IMR-90 (cell line): ENCODE measurements at regions of chr13 and their contacts with region 1.

Region 1: DNA sequence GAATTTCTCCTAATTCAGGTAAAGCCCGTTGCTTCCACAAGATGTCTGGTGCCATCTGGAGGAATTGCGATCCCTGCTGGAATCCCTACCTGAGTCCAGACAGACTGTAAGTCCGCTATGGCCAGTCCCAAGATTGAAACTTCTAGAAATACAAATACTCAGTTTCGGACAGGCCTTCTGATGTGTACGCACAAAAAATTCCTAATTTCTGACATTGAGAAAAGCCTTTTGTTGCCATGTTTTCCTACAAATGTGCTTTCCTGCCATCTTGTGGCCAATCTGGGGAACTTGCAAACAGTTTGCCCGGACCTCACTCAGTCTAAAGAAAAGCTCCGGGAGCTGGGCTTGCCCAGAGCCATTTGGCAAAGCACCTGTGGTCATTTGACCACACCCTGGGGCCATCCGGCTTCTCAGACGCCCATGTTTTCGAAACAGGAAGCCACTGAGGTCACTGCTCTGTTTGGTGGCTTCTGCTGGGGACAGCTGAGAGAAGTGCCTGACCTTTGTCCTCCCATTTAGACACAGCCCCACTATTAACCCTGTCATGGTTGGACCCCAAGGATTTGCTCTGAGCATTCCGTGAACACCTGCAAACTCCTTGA is 79.4 kb downstream of the SLC15A1 start:
- DNase-seq: peak; percentile 75
- ATAC-seq: peak; percentile 82
- H3K4me3 ChIP-seq: no peak overlapping the region
- H3K27ac ChIP-seq: no peak overlapping the region
- H3K4me1 ChIP-seq: peaks cover 6% of the 10 kb centered on the region; the same call in 1 of the 2 replicates
- H3K27me3 ChIP-seq: peaks cover 16% of the 10 kb centered on the region
- CTCF ChIP-seq: peak; percentile 85
- POLR2A ChIP-seq: no peak
- RAD21 ChIP-seq: peak; percentile 82

Region 2: GRCh38 chr13:97849305-97849704 is 823.7 kb before region 1 on chr13:
- CTCF ChIA-PET with region 1: no interaction called
- POLR2A ChIA-PET with region 1: no interaction called
- dilution Hi-C with region 1: no loop called
- in situ Hi-C with region 1: loop called (anchors 25 kb)
- intact Hi-C with region 1: loop called (anchors 5 kb)
- DNase-seq: peak; percentile 52
- ATAC-seq: peak; percentile 73
- H3K4me3 ChIP-seq: no peak overlapping the region
- H3K27ac ChIP-seq: no peak overlapping the region
- H3K4me1 ChIP-seq: peaks cover 3% of the 10 kb centered on the region; the same call in 1 of the 2 replicates
- H3K27me3 ChIP-seq: peaks cover 4% of the 10 kb centered on the region
- CTCF ChIP-seq: peak; percentile 58
- POLR2A ChIP-seq: no peak
- RAD21 ChIP-seq: peak; percentile 70

Region 3: GRCh38 chr13:98445340-98446233 is 227.5 kb before region 1 on chr13:
- CTCF ChIA-PET with region 1: interaction called, 6 read pairs
- POLR2A ChIA-PET with region 1: no interaction called
- dilution Hi-C with region 1: loop called (anchors 25 kb)
- in situ Hi-C with region 1: no loop called
- intact Hi-C with region 1: loop called (anchors 1 kb)
- DNase-seq: peak; percentile 41
- ATAC-seq: peak; percentile 82
- H3K4me3 ChIP-seq: no peak overlapping the region
- H3K27ac ChIP-seq: no peak overlapping the region
- H3K4me1 ChIP-seq: peaks cover 13% of the 10 kb centered on the region
- H3K27me3 ChIP-seq: no peaks in the 10 kb centered on the region
- CTCF ChIP-seq: peak; percentile 84
- POLR2A ChIP-seq: no peak
- RAD21 ChIP-seq: peak; percentile 86

Region 4: GRCh38 chr13:98454389-98454881 is 218.6 kb before region 1 on chr13:
- CTCF ChIA-PET with region 1: no interaction called
- POLR2A ChIA-PET with region 1: no interaction called
- dilution Hi-C with region 1: loop called (anchors 25 kb)
- in situ Hi-C with region 1: no loop called
- intact Hi-C with region 1: loop called (anchors 2 kb)
- DNase-seq: peak; percentile 94
- ATAC-seq: peak; percentile 75
- H3K4me3 ChIP-seq: no peak overlapping the region
- H3K27ac ChIP-seq: peak overlapping the region; percentile 91
- H3K4me1 ChIP-seq: peaks cover 14% of the 10 kb centered on the region
- H3K27me3 ChIP-seq: no peaks in the 10 kb centered on the region
- CTCF ChIP-seq: no peak
- POLR2A ChIP-seq: no peak
- RAD21 ChIP-seq: no peak

Region 5: DNA sequence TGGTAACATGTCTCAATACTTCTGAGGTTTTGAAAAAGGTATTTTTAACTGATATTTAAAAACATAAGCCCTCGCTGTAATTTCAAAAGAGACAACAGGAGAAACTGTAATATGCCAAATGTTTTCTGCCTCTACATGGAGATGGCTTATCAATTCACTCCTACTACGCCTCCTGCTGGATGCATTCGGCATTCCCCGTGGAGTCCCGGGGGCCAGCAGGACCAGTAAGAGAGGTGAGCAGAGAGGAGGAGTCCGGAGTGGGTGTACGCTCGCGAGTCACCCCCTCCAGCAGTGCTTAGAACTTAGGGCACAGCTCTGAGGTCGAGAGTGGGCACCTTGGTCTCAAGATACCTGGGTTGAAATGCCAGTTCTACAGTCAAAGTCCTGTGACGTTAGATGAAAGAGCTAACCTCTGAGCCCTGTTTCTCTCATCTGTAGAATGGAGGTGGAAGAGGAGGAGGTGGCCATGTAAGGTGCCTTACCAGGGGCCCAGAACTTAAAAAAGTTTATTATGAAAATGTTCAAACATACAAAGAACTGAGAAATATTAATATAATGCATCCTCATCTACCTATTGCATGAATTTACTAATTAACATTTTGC is 206.3 kb before region 1 on chr13:
- CTCF ChIA-PET with region 1: no interaction called
- POLR2A ChIA-PET with region 1: no interaction called
- dilution Hi-C with region 1: loop called (anchors 25 kb)
- in situ Hi-C with region 1: no loop called
- intact Hi-C with region 1: loop called (anchors 5 kb)
- DNase-seq: peak; percentile 55
- ATAC-seq: peak; percentile 77
- H3K4me3 ChIP-seq: no peak overlapping the region
- H3K27ac ChIP-seq: no peak overlapping the region
- H3K4me1 ChIP-seq: 0 out of 2 replicates have a peak, but pooled peaks cover 3% of the 10 kb centered on the region
- H3K27me3 ChIP-seq: no peaks in the 10 kb centered on the region
- CTCF ChIP-seq: peak; percentile 70
- POLR2A ChIP-seq: no peak
- RAD21 ChIP-seq: peak; percentile 59